ENCODE measurements at regions of chr2 and their contacts with region 1.

Region 1: DNA sequence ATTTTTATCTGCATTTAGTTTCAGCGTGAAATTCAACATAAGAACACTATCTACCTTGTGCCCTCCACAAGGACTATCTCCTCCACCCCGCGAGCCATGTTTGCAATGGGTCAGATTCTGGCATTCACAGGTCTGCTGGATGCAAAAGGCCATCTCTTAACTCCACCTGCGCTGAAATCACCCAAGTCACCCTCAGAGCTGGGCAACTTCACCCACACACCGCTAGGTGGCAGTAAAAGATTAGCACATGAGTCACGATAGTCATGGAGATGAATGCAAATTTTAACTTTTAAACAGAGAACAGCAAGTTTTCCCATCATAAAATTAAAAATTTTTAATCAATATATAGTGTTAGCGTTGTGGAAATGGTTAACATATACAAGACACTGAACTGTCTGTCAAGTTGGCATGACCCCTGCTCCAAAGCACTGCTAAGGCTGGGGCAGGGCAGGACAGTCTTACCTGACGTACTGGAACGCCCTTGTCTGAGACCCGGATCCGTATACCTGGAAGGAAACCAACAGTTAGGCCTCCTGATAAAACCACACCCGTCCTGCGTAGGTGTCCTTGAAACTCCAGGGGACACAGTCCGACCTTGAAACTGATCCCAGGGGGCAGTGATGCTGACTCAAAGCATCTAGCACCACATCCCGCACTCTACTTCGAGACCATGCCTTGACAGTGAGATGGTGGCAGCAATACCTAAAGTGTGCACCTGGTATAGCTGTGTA is 89.6 kb downstream of the UXS1 start:
- DNase-seq: peak; percentile 44
- H3K4me3 Mint-ChIP-seq: no peak overlapping the region
- H3K27ac Mint-ChIP-seq: no peak overlapping the region
- H3K4me1 Mint-ChIP-seq: peaks cover 14% of the 10 kb centered on the region
- H3K27me3 Mint-ChIP-seq: no peaks in the 10 kb centered on the region

Region 2: DNA sequence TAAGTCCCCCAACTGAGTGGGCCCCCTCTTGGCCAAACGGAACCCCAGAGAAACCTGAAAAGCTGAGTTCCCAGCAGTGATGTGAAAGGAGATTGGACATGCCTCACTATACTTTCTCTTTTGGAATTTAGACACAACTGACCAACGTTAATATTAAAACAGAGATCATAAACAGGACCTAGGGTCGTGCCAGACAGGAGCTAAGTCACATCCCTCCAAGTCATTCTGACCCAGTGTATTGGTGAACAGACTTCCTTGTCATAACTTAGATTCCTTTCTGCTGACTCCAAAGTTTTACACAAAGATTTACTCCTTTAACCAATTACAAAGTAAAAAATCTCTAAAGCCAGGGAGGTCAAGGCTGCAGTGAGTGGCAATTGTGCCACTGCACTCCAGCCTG is 42.7 kb after region 1 on chr2:
- intact Hi-C with region 1: loop called (anchors 5 kb)
- DNase-seq: no peak
- H3K4me3 Mint-ChIP-seq: no peak overlapping the region
- H3K27ac Mint-ChIP-seq: peak overlapping the region; percentile 79
- H3K4me1 Mint-ChIP-seq: peaks cover 47% of the 10 kb centered on the region
- H3K27me3 Mint-ChIP-seq: no peaks in the 10 kb centered on the region

Region 3: GRCh38 chr2:106160786-106161261 is 56.3 kb after region 1 on chr2:
- intact Hi-C with region 1: loop called (anchors 5 kb)
- DNase-seq: peak; percentile 24
- H3K4me3 Mint-ChIP-seq: peak overlapping the region; percentile 81
- H3K27ac Mint-ChIP-seq: peak overlapping the region; percentile 92
- H3K4me1 Mint-ChIP-seq: peaks cover 64% of the 10 kb centered on the region
- H3K27me3 Mint-ChIP-seq: no peaks in the 10 kb centered on the region

Region 4: DNA sequence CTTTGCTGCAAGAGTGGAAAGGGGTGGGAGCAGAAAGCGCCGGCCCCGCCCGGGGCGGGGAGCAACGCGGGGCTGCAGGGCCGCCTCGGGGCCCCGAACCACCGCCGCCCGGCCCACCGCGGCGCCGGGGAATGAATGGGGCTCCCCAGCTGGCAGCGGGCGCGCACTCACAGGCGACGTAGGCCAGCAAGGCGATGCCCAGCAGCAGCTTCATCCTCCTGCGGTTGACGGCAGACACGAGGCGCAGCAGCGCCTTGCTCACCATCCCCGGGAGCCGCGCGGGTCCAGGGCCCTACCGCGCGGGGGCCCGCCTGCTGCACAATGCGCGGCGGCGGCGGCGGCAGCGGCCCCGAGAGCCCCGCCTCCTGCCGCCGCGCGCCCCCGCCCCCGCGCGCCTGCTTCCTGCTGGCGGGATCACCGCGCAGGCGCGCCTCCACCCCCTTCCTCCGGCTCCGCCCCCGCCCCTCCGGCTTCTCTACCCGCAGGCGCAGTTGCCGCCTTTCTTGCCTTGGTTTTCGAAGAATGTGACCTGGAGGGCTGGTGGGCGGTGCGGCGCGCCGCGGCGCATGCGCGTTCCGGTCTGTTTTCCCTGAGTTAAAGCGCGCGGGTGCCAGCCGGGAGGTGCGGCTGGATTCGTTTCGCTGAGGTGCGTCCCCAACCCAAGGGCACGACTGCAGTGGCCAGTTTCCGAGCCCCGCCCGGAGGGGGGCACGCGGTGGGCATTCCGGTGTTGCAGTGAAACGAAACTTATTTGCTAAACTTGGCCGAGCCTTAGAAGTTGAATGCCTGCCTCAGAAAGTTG is 89.7 kb after region 1 on chr2 and contains the start of gene UXS1:
- intact Hi-C with region 1: loop called (anchors 2 kb)
- DNase-seq: peak; percentile 97
- H3K4me3 Mint-ChIP-seq: peak within 1 kb of the TSS; percentile 85
- H3K27ac Mint-ChIP-seq: peak within 1 kb of the TSS; percentile 75
- H3K4me1 Mint-ChIP-seq: peaks cover 32% of the 10 kb centered on the region
- H3K27me3 Mint-ChIP-seq: peaks cover 18% of the 10 kb centered on the region
- total RNA-seq, gene UXS1: 29.7 and 34.9 TPM in 2 replicates

Region 5: GRCh38 chr2:106233350-106233706 is 128.8 kb after region 1 on chr2:
- intact Hi-C with region 1: no loop called
- DNase-seq: no peak
- H3K4me3 Mint-ChIP-seq: no peak overlapping the region
- H3K27ac Mint-ChIP-seq: no peak overlapping the region
- H3K4me1 Mint-ChIP-seq: no peaks in the 10 kb centered on the region
- H3K27me3 Mint-ChIP-seq: peaks cover under 1% of the 10 kb centered on the region

Region 6: GRCh38 chr2:106542811-106543259 is 438.3 kb after region 1 on chr2:
- intact Hi-C with region 1: loop called (anchors 1 kb)
- DNase-seq: peak; percentile 53
- H3K4me3 Mint-ChIP-seq: peak overlapping the region; percentile 51
- H3K27ac Mint-ChIP-seq: no peak overlapping the region
- H3K4me1 Mint-ChIP-seq: peaks cover 1% of the 10 kb centered on the region
- H3K27me3 Mint-ChIP-seq: peaks cover 19% of the 10 kb centered on the region

Measured in activated T-helper 2 cell treated with anti-CD3 and anti-CD28 coated beads, Interferon-gamma antibody, Interleukin-2, Interleukin-4, amounts not matched to agents 10 μg/mL and 5 μg/mL and 100 μg/mL, durations not matched to agents 14 hours and 24 hours and 36 hours (primary cell).